OCI-LY7 (cell line): ENCODE measurements at regions of chr1 and their contacts with region 1.

Region 1: DNA sequence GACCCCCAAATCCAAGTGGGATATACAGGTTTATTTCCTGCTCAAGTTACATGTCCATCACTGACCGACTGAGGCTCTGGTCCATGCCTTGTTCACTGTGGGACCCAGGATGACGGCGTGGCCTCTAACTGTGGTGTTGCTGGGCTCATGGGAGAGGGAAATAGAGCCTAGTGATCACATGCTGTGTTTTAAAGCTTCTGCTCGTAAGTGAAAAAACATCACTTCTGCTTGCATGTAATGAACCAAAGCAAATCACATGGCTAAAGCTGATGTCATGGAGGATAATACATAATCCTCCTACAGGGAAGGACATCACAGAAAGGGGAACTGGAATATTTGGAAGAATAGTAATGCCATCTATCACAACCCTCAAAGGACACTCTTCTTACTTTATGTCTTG is 107.6 kb downstream of the FASLG start:
- DNase-seq: no peak
- H3K4me3 ChIP-seq: no peak overlapping the region
- H3K27ac ChIP-seq: no peak overlapping the region
- H3K4me1 ChIP-seq: peaks cover 13% of the 10 kb centered on the region
- CTCF ChIP-seq: no peak

Region 2: GRCh38 chr1:172556461-172556860 is 210.0 kb before region 1 on chr1:
- CTCF ChIA-PET with region 1: no interaction called
- POLR2A ChIA-PET with region 1: no interaction called
- intact Hi-C with region 1: no loop called
- DNase-seq: no peak
- H3K4me3 ChIP-seq: no peak overlapping the region
- H3K27ac ChIP-seq: no peak overlapping the region
- H3K4me1 ChIP-seq: no peaks in the 10 kb centered on the region
- CTCF ChIP-seq: no peak

Region 3: GRCh38 chr1:173798078-173798477 is 1031.6 kb after region 1 on chr1:
- CTCF ChIA-PET with region 1: no interaction called
- POLR2A ChIA-PET with region 1: interaction called, 10 read pairs
- intact Hi-C with region 1: no loop called
- DNase-seq: no peak
- H3K4me3 ChIP-seq: no peak overlapping the region
- H3K27ac ChIP-seq: no peak overlapping the region
- H3K4me1 ChIP-seq: no peaks in the 10 kb centered on the region
- CTCF ChIP-seq: no peak